Naive thymus-derived CD4-positive, alpha-beta T cell (primary cell): ENCODE measurements at regions of chr13 and their contacts with region 1.

Region 1: DNA sequence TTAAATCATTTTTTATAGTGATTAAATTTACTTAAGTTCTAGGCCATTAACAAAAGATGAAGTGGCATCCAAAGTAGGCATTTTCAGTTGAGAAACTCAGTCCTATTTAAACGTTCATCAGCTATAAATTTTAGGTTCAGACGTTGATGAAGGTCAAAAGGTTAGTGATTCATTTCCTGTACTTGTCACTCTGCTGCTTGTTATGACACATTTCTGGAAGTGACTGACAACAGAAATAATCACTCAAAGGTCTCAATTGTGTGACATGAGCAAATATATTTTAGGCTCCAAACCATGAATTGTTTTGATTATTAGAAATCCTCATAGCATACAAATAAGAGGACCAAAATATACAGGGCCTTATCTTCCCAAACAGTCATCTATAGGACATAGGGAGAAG is 10.3 kb upstream of the EDNRB start:
- DNase-seq: no peak
- ATAC-seq: peak; percentile 49
- H3K4me3 ChIP-seq: no peak overlapping the region
- H3K4me3 Mint-ChIP-seq: no peak overlapping the region
- H3K27ac ChIP-seq: no peak overlapping the region
- H3K27ac Mint-ChIP-seq: no peak overlapping the region
- H3K4me1 ChIP-seq: no peaks in the 10 kb centered on the region
- H3K4me1 Mint-ChIP-seq: peaks cover 0 to 11% (median 0%) of the 10 kb centered on the region in 7 donors
- H3K27me3 ChIP-seq: peaks cover 0 to 3% of the 10 kb centered on the region in 2 donors
- H3K27me3 Mint-ChIP-seq: peaks cover 5 to 38% (median 19%) of the 10 kb centered on the region in 5 donors

Region 2: DNA sequence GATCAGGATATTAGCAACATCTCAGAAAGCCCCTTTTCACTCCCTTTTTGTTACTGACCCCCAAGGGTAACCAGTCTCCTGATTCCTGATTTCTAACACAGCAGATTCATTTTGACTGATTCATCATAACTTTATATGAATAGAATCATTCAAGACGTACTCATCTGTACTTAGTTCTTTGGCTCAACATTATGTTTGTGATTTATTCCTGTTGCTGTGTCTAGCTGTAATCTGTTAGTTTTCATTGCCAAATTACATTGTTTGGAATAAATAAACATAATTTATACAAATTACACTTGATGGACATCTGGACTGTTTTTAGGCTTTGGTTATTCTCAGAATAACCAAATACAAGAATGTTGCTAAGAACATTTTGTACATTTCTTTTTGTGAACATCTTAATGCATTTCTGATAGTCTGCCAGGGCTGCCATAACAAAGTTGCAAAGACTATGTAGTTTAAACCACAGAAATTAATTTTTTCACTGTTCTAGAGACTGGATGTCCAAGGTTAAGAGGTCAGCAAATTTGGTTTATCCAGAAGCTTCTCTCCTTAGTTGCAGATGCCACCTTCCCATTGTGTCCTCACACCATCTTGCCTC is 52.5 kb after region 1 on chr13:
- CTCF ChIA-PET with region 1: no interaction called
- POLR2A ChIA-PET with region 1: no interaction called
- intact Hi-C with region 1: no loop called
- DNase-seq: no peak
- ATAC-seq: no peak
- H3K4me3 ChIP-seq: no peak overlapping the region
- H3K4me3 Mint-ChIP-seq: no peak overlapping the region
- H3K27ac ChIP-seq: no peak overlapping the region
- H3K27ac Mint-ChIP-seq: no peak overlapping the region
- H3K4me1 ChIP-seq: no peaks in the 10 kb centered on the region
- H3K4me1 Mint-ChIP-seq: no peaks in the 10 kb centered on the region
- H3K27me3 ChIP-seq: no peaks in the 10 kb centered on the region
- H3K27me3 Mint-ChIP-seq: peaks cover 0 to 23% (median 9%) of the 10 kb centered on the region in 5 donors

Region 3: GRCh38 chr13:78603240-78603957 is 674.5 kb after region 1 on chr13 and contains the start of gene POU4F1:
- CTCF ChIA-PET with region 1: no interaction called
- POLR2A ChIA-PET with region 1: no interaction called
- intact Hi-C with region 1: loop called in 1 of 2 experiments (anchors 10 kb)
- DNase-seq: peak in 4 of 9 donors; percentile 44 to 70 (median 50)
- ATAC-seq: peak; percentile 59
- H3K4me3 ChIP-seq: peak within 1 kb of the TSS; percentile 43
- H3K4me3 Mint-ChIP-seq: peak within 1 kb of the TSS; percentile 76 to 95 (median 85)
- H3K27ac ChIP-seq: no peak within 1 kb of the TSS
- H3K27ac Mint-ChIP-seq: peak within 1 kb of the TSS in 6 of 9 donors; percentile 7 to 89 (median 68)
- H3K4me1 ChIP-seq: peaks cover 4 to 31% of the 10 kb centered on the region in 2 donors
- H3K4me1 Mint-ChIP-seq: peaks cover 35 to 70% (median 56%) of the 10 kb centered on the region in 7 donors
- H3K27me3 ChIP-seq: peaks cover 44 to 74% of the 10 kb centered on the region in 2 donors
- H3K27me3 Mint-ChIP-seq: peaks cover 82 to 91% (median 88%) of the 10 kb centered on the region in 5 donors
- total RNA-seq, gene POU4F1: 0.08 to 0.22 (median 0.15) TPM in 3 of 5 experiments, not detected in the others